GM12878 (cell line): ENCODE measurements at regions of chr1 and their contacts with region 1.

Region 1: GRCh38 chr1:224513787-224514209 is 79.2 kb upstream of the WDR26 start:
- DNase-seq: no peak
- ATAC-seq: peak; percentile 100
- H3K4me3 ChIP-seq: no peak overlapping the region
- H3K27ac ChIP-seq: no peak overlapping the region
- H3K4me1 ChIP-seq: 0 out of 2 replicates have a peak, but pooled peaks cover 5% of the 10 kb centered on the region
- H3K27me3 ChIP-seq: no peaks in the 10 kb centered on the region
- CTCF ChIP-seq: peak; percentile 86 to 98 (median 92); a peak in 5 of 6 replicates
- EP300 ChIP-seq: no peak
- POLR2A ChIP-seq: no peak
- RAD21 ChIP-seq: peak; percentile 92

Region 2: DNA sequence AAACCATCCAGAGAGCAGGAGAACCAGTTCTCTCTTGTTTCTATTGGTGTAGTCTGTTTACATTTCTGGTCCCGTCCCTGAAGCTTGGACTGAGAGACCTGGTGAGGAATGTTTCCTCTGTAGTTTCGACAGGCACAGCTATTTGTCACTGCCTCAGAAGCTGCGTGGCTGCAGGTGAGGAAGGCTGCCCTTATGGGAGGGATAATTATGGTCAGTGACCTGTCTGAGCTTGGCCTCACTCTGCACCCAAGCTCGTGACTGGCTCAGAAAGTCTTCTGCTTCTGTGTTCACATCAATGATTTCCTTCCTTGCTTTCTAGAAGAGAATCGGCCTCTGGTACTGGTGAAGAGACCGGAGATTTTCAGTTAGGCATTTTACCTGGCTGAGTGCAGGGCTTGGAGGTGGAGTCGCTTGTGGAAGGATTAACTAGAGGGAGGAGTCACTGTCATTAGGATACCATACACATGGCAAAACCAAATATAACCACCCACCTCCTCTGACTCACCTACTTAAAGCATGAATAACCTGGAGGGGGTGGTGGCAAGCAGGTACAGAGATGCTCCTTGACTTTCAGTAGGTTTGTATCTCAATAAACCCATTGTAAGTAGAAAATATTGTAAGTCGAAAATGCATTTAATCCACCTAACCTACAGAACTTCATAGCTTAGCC is 59.3 kb before region 1 on chr1:
- CTCF ChIA-PET with region 1: interaction called, 20 read pairs
- POLR2A ChIA-PET with region 1: no interaction called
- RAD21 ChIA-PET with region 1: interaction called, 5 read pairs
- SMC1A ChIA-PET with region 1: interaction called, 3 read pairs
- in situ Hi-C with region 1: no loop called
- intact Hi-C with region 1: no loop called
- DNase-seq: no peak
- ATAC-seq: no peak
- H3K4me3 ChIP-seq: no peak overlapping the region
- H3K27ac ChIP-seq: no peak overlapping the region
- H3K4me1 ChIP-seq: no peaks in the 10 kb centered on the region
- H3K27me3 ChIP-seq: no peaks in the 10 kb centered on the region
- CTCF ChIP-seq: no peak
- EP300 ChIP-seq: no peak
- POLR2A ChIP-seq: no peak
- RAD21 ChIP-seq: no peak

Region 3: DNA sequence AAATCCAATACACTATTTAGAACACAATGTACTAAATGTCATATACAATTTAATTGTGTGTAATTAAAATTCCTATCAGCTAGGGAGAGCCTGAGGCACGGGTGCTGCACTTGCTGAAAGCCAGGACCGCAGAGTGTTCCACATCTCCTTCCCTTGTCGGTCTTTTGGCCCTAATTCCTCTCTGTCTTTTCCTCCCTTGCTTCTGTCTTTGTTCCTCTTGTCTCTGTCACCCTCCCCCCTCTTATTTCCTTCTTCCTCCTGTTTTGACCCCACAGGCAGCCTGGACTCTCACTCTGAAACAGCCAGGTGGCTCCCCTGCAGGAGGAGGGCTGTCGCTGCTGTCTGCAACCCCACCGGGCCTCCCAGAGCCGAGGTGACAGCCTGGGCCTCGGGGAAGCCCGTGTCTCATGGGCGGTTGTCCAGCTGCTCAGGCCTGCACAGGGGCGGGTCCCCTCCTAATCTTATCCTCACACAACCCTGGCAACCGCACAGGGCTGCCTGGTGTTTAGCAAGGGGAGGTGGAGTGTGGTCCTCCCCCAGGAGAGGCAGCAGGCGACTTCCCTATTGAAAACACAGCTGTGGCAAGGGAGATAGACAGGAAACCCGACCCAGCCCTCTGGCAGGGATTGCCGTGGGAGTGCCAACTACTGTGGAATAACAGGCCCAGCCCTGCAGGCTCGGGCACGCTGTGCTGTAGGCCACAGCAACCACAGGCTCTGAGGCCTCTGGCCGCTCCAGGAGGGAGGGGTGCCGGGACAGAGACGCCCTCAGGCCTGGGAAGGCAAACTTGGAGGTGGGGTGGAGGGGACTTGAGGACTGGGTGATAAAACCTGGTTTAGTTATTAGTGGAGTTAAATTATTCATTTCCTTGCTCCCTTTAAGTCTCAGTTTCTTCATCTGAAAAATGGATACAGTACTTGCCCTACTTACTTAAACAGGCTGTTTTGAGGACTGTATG is 10.4 kb before region 1 on chr1:
- CTCF ChIA-PET with region 1: interaction called, 31 read pairs
- POLR2A ChIA-PET with region 1: no interaction called
- RAD21 ChIA-PET with region 1: interaction called, 11 read pairs
- SMC1A ChIA-PET with region 1: interaction called, 15 read pairs
- in situ Hi-C with region 1: no loop called
- intact Hi-C with region 1: no loop called
- DNase-seq: peak; percentile 51
- ATAC-seq: peak; percentile 96
- H3K4me3 ChIP-seq: peak overlapping the region; percentile 24; the same call in 1 of the 2 replicates
- H3K27ac ChIP-seq: peak overlapping the region; percentile 56
- H3K4me1 ChIP-seq: peaks cover 30% of the 10 kb centered on the region
- H3K27me3 ChIP-seq: no peaks in the 10 kb centered on the region
- CTCF ChIP-seq: peak; percentile 22 to 40 (median 35); a peak in 4 of 6 replicates
- EP300 ChIP-seq: no peak; a peak in 2 of 4 replicates
- POLR2A ChIP-seq: peak; percentile 58
- RAD21 ChIP-seq: peak; percentile 61

Region 4: GRCh38 chr1:224632381-224632871 is 118.6 kb after region 1 on chr1:
- CTCF ChIA-PET with region 1: interaction called, 17 read pairs
- POLR2A ChIA-PET with region 1: no interaction called
- RAD21 ChIA-PET with region 1: no interaction called
- SMC1A ChIA-PET with region 1: interaction called, 5 read pairs
- in situ Hi-C with region 1: no loop called
- intact Hi-C with region 1: no loop called
- DNase-seq: no peak
- ATAC-seq: no peak
- H3K4me3 ChIP-seq: no peak overlapping the region
- H3K27ac ChIP-seq: no peak overlapping the region
- H3K4me1 ChIP-seq: no peaks in the 10 kb centered on the region
- H3K27me3 ChIP-seq: peaks cover 0 to 3% of the 10 kb centered on the region in 2 experiments; a peak in 1 of 4 replicates
- CTCF ChIP-seq: no peak
- EP300 ChIP-seq: no peak
- POLR2A ChIP-seq: no peak
- RAD21 ChIP-seq: no peak

Region 5: GRCh38 chr1:224736619-224737352 is 223.0 kb after region 1 on chr1:
- CTCF ChIA-PET with region 1: interaction called, 5 read pairs
- POLR2A ChIA-PET with region 1: no interaction called
- RAD21 ChIA-PET with region 1: interaction called, 3 read pairs
- SMC1A ChIA-PET with region 1: interaction called, 5 read pairs
- in situ Hi-C with region 1: no loop called
- intact Hi-C with region 1: loop called (anchors 2 kb)
- DNase-seq: peak; percentile 93
- ATAC-seq: peak; percentile 61
- H3K4me3 ChIP-seq: no peak overlapping the region
- H3K27ac ChIP-seq: peak overlapping the region; percentile 49
- H3K4me1 ChIP-seq: peaks cover 77% of the 10 kb centered on the region
- H3K27me3 ChIP-seq: no peaks in the 10 kb centered on the region
- CTCF ChIP-seq: no peak
- EP300 ChIP-seq: peak; percentile 88 to 90; a peak in 3 of 4 replicates
- POLR2A ChIP-seq: no peak
- RAD21 ChIP-seq: no peak

Region 6: GRCh38 chr1:224879162-224879803 is 365.5 kb after region 1 on chr1:
- CTCF ChIA-PET with region 1: interaction called, 12 read pairs
- POLR2A ChIA-PET with region 1: no interaction called
- RAD21 ChIA-PET with region 1: no interaction called
- SMC1A ChIA-PET with region 1: interaction called, 3 read pairs
- in situ Hi-C with region 1: no loop called
- intact Hi-C with region 1: no loop called
- DNase-seq: no peak
- ATAC-seq: peak; percentile 16; the same call in 2 of the 3 replicates
- H3K4me3 ChIP-seq: no peak overlapping the region
- H3K27ac ChIP-seq: no peak overlapping the region
- H3K4me1 ChIP-seq: no peaks in the 10 kb centered on the region
- H3K27me3 ChIP-seq: no peaks in the 10 kb centered on the region
- CTCF ChIP-seq: no peak
- EP300 ChIP-seq: no peak
- POLR2A ChIP-seq: no peak
- RAD21 ChIP-seq: no peak